ENCODE measurements at regions of chr20 and their contacts with region 1.

Region 1: DNA sequence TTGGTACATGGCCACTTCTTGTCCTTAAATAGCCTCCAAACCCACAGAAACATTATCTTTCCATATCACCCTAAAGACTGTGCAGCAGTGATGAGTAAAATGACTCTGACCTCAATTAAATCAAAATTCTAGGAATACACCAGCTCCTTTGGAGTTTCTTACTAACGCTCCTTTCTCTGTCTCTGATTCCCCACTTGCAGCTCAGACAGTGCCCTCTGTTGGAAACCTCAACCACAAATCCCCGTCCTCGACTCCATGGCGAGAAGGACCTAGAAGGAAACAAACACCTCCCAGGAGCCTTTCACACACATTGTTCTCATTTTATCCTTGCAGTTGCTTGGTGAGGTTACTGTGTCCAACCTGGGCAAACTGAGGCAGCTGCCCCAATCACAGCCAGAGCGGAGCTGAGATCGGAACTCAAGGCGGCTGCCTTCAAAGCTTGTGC is 17.7 kb upstream of the PARD6B start:
- DNase-seq: peak; percentile 76 to 80
- H3K4me3 ChIP-seq: no peak overlapping the region
- H3K4me3 Mint-ChIP-seq: peak overlapping the region; percentile 4
- H3K27ac Mint-ChIP-seq: peak overlapping the region; percentile 60
- H3K4me1 ChIP-seq: peaks cover 68% of the 10 kb centered on the region
- H3K4me1 Mint-ChIP-seq: peaks cover 60% of the 10 kb centered on the region
- H3K27me3 ChIP-seq: no peaks in the 10 kb centered on the region
- H3K27me3 Mint-ChIP-seq: no peaks in the 10 kb centered on the region
- CTCF ChIP-seq: peak; percentile 62 to 63

Region 2: GRCh38 chr20:50625986-50626677 is 87.5 kb before region 1 on chr20:
- CTCF ChIA-PET with region 1: interaction called, 32 read pairs
- POLR2A ChIA-PET with region 1: no interaction called
- intact Hi-C with region 1: loop called (anchors 2 kb)
- DNase-seq: peak; percentile 85 to 91
- H3K4me3 ChIP-seq: no peak overlapping the region
- H3K4me3 Mint-ChIP-seq: no peak overlapping the region
- H3K27ac Mint-ChIP-seq: peak overlapping the region; percentile 23
- H3K4me1 ChIP-seq: peaks cover 41% of the 10 kb centered on the region
- H3K4me1 Mint-ChIP-seq: peaks cover 12% of the 10 kb centered on the region
- H3K27me3 ChIP-seq: no peaks in the 10 kb centered on the region
- H3K27me3 Mint-ChIP-seq: no peaks in the 10 kb centered on the region
- CTCF ChIP-seq: peak; percentile 96 to 97

Region 3: DNA sequence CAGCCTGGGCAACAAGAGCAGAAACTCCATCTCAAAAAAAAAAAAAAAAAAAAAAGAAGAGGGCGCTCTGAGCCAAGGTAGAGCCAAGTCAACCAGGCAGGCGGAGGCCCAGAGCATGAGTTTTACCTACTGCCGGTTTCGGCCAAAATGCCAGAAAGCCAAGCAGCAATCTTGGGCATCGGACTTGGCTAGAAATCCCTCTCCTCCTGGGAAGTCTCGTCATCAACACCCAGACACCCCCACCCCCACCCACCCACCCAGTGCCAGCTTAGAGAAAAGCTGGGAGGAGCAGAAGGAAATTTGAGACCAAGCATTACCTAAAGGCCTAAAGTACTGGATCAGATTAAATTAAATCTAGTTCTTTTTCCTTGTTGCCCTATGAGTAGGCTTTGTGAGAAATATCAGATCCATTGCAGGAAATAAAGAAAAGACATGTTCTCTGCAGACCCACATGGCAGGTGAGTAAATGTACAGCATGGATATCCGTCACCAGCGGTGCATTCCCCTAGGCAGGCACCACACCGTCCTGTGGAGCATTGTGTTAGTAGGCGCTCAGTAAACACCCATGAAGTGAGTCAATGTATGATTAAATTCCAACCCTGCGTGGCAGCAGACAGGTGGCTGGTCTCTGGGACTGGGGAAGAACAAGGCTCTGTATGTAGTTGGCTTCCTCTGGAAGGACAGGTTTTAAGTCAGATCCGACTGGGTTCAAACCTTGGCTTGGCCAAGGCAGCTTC is 43.4 kb before region 1 on chr20:
- CTCF ChIA-PET with region 1: interaction called, 27 read pairs
- POLR2A ChIA-PET with region 1: interaction called, 4 read pairs
- intact Hi-C with region 1: loop called (anchors 1 kb)
- DNase-seq: peak; percentile 86 to 89
- H3K4me3 ChIP-seq: no peak overlapping the region
- H3K4me3 Mint-ChIP-seq: no peak overlapping the region
- H3K27ac Mint-ChIP-seq: peak overlapping the region; percentile 71
- H3K4me1 ChIP-seq: peaks cover 82% of the 10 kb centered on the region
- H3K4me1 Mint-ChIP-seq: peaks cover 76% of the 10 kb centered on the region
- H3K27me3 ChIP-seq: no peaks in the 10 kb centered on the region
- H3K27me3 Mint-ChIP-seq: no peaks in the 10 kb centered on the region
- CTCF ChIP-seq: no peak

Region 4: GRCh38 chr20:50690634-50691572 is 22.8 kb before region 1 on chr20 and contains the start of gene RIPOR3:
- CTCF ChIA-PET with region 1: interaction called, 14 read pairs
- POLR2A ChIA-PET with region 1: no interaction called
- intact Hi-C with region 1: no loop called
- DNase-seq: no peak
- H3K4me3 ChIP-seq: no peak within 1 kb of the TSS
- H3K4me3 Mint-ChIP-seq: no peak within 1 kb of the TSS
- H3K27ac Mint-ChIP-seq: no peak within 1 kb of the TSS
- H3K4me1 ChIP-seq: peaks cover 28% of the 10 kb centered on the region
- H3K4me1 Mint-ChIP-seq: peaks cover 20% of the 10 kb centered on the region
- H3K27me3 ChIP-seq: no peaks in the 10 kb centered on the region
- H3K27me3 Mint-ChIP-seq: no peaks in the 10 kb centered on the region
- CTCF ChIP-seq: no peak
- total RNA-seq, gene RIPOR3: 0.18 and 0.67 TPM in 2 replicates

Region 5: GRCh38 chr20:50724851-50725721 is 11.4 kb after region 1 on chr20:
- CTCF ChIA-PET with region 1: interaction called, 24 read pairs
- POLR2A ChIA-PET with region 1: interaction called, 7 read pairs
- intact Hi-C with region 1: no loop called
- DNase-seq: peak; percentile 81 to 92
- H3K4me3 ChIP-seq: no peak overlapping the region
- H3K4me3 Mint-ChIP-seq: no peak overlapping the region
- H3K27ac Mint-ChIP-seq: no peak overlapping the region
- H3K4me1 ChIP-seq: peaks cover 70% of the 10 kb centered on the region
- H3K4me1 Mint-ChIP-seq: peaks cover 30% of the 10 kb centered on the region
- H3K27me3 ChIP-seq: no peaks in the 10 kb centered on the region
- H3K27me3 Mint-ChIP-seq: no peaks in the 10 kb centered on the region
- CTCF ChIP-seq: no peak

Region 6: GRCh38 chr20:50744143-50744792 is 30.6 kb after region 1 on chr20:
- CTCF ChIA-PET with region 1: interaction called, 20 read pairs
- POLR2A ChIA-PET with region 1: interaction called, 4 read pairs
- intact Hi-C with region 1: loop called (anchors 1 kb)
- DNase-seq: peak; percentile 90 to 98
- H3K4me3 ChIP-seq: peak overlapping the region; percentile 8
- H3K4me3 Mint-ChIP-seq: peak overlapping the region; percentile 60
- H3K27ac Mint-ChIP-seq: peak overlapping the region; percentile 76
- H3K4me1 ChIP-seq: peaks cover 93% of the 10 kb centered on the region
- H3K4me1 Mint-ChIP-seq: peaks cover 75% of the 10 kb centered on the region
- H3K27me3 ChIP-seq: no peaks in the 10 kb centered on the region
- H3K27me3 Mint-ChIP-seq: no peaks in the 10 kb centered on the region
- CTCF ChIP-seq: peak; percentile 62 to 75

Region 7: GRCh38 chr20:50762435-50763201 is 48.9 kb after region 1 on chr20:
- CTCF ChIA-PET with region 1: interaction called, 4 read pairs
- POLR2A ChIA-PET with region 1: no interaction called
- intact Hi-C with region 1: loop called (anchors 1 kb)
- DNase-seq: peak; percentile 54 to 72
- H3K4me3 ChIP-seq: no peak overlapping the region
- H3K4me3 Mint-ChIP-seq: peak overlapping the region; percentile 78
- H3K27ac Mint-ChIP-seq: peak overlapping the region; percentile 100
- H3K4me1 ChIP-seq: peaks cover 87% of the 10 kb centered on the region
- H3K4me1 Mint-ChIP-seq: peaks cover 82% of the 10 kb centered on the region
- H3K27me3 ChIP-seq: no peaks in the 10 kb centered on the region
- H3K27me3 Mint-ChIP-seq: no peaks in the 10 kb centered on the region
- CTCF ChIP-seq: no peak

Region 8: GRCh38 chr20:50837532-50838506 is 124.1 kb after region 1 on chr20:
- CTCF ChIA-PET with region 1: no interaction called
- POLR2A ChIA-PET with region 1: no interaction called
- intact Hi-C with region 1: no loop called
- DNase-seq: no peak
- H3K4me3 ChIP-seq: no peak overlapping the region
- H3K4me3 Mint-ChIP-seq: no peak overlapping the region
- H3K27ac Mint-ChIP-seq: no peak overlapping the region
- H3K4me1 ChIP-seq: no peaks in the 10 kb centered on the region
- H3K4me1 Mint-ChIP-seq: peaks cover 7% of the 10 kb centered on the region
- H3K27me3 ChIP-seq: no peaks in the 10 kb centered on the region
- H3K27me3 Mint-ChIP-seq: no peaks in the 10 kb centered on the region
- CTCF ChIP-seq: no peak